ENCODE measurements at regions of chr17 and their contacts with region 1.

Region 1: GRCh38 chr17:7484067-7484918 is at the start of gene POLR2A:
- DNase-seq: peak; percentile 97
- H3K4me3 ChIP-seq: peak within 1 kb of the TSS; percentile 63 to 72
- H3K27ac ChIP-seq: peak within 1 kb of the TSS; percentile 100
- H3K4me1 ChIP-seq: peaks cover 2% of the 10 kb centered on the region
- H3K27me3 ChIP-seq: no peaks in the 10 kb centered on the region
- CTCF ChIP-seq: peak in 2 of 4 experiments; percentile 28 to 42
- POLR2A ChIP-seq: peak; percentile 99
- total RNA-seq, gene POLR2A: 79.7 to 217 TPM

Region 2: DNA sequence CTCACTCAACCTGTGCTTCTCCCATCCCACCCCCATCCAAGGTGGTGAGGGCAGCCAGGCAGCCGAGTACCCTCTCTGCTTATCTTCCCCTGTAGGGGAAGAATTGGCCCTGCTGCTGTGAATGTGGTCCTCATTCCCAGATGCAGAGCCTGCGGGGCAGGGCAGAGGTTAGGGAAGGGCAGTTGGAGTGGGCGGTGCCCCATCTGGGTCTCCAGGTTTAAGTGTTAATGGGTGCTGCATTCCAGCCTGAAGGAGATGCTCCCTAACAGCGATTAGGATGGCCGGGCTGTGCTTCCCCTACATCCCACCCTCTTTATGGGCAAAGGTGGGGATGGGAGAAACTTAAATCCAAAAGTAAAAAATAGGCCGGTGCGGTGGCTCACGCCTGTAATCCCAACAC is 117.2 kb before region 1 on chr17:
- intact Hi-C with region 1: no loop called
- DNase-seq: no peak
- H3K4me3 ChIP-seq: no peak overlapping the region
- H3K27ac ChIP-seq: no peak overlapping the region
- H3K4me1 ChIP-seq: no peaks in the 10 kb centered on the region
- H3K27me3 ChIP-seq: no peaks in the 10 kb centered on the region
- CTCF ChIP-seq: no peak
- POLR2A ChIP-seq: no peak

Region 3: GRCh38 chr17:7403977-7404736 is 80.1 kb before region 1 on chr17 and contains the start of gene TMEM256:
- intact Hi-C with region 1: loop called (anchors 5 kb)
- DNase-seq: peak; percentile 99
- H3K4me3 ChIP-seq: peak within 1 kb of the TSS; percentile 70 to 80
- H3K27ac ChIP-seq: peak within 1 kb of the TSS; percentile 83 to 86
- H3K4me1 ChIP-seq: no peaks in the 10 kb centered on the region
- H3K27me3 ChIP-seq: no peaks in the 10 kb centered on the region
- CTCF ChIP-seq: peak in 2 of 4 experiments; percentile 31 to 45
- POLR2A ChIP-seq: peak; percentile 99
- total RNA-seq, gene TMEM256: 63.0 to 192 TPM

Region 4: GRCh38 chr17:7435221-7435675 is 49.0 kb before region 1 on chr17 and contains the start of gene TMEM102:
- intact Hi-C with region 1: loop called (anchors 5 kb)
- DNase-seq: peak; percentile 97
- H3K4me3 ChIP-seq: peak within 1 kb of the TSS; percentile 26 to 40
- H3K27ac ChIP-seq: peak within 1 kb of the TSS; percentile 81 to 82
- H3K4me1 ChIP-seq: peaks cover 15% of the 10 kb centered on the region
- H3K27me3 ChIP-seq: no peaks in the 10 kb centered on the region
- CTCF ChIP-seq: no peak
- POLR2A ChIP-seq: peak; percentile 78
- total RNA-seq, gene TMEM102: 9.9 to 10.3 TPM

Region 5: GRCh38 chr17:7687908-7688807 is 203.9 kb after region 1 on chr17 and contains the start of gene WRAP53:
- intact Hi-C with region 1: loop called (anchors 10 kb)
- DNase-seq: peak; percentile 99
- H3K4me3 ChIP-seq: peak within 1 kb of the TSS; percentile 66 to 77
- H3K27ac ChIP-seq: peak within 1 kb of the TSS; percentile 90 to 93
- H3K4me1 ChIP-seq: peaks cover 9% of the 10 kb centered on the region
- H3K27me3 ChIP-seq: no peaks in the 10 kb centered on the region
- CTCF ChIP-seq: peak; percentile 90 to 100 (median 100)
- POLR2A ChIP-seq: peak; percentile 23
- total RNA-seq, gene WRAP53: 8.6 to 9.4 TPM

Measured in prostate gland (tissue), 2 donors.